Dendritic cell treated with granulocyte-macrophage colony-stimulating factor and Interleukin-4, amounts not matched to agents 40 ng/mL and 50 ng/mL, for 4 days (primary cell): ENCODE measurements at regions of chr2 and their contacts with region 1.

Region 1: DNA sequence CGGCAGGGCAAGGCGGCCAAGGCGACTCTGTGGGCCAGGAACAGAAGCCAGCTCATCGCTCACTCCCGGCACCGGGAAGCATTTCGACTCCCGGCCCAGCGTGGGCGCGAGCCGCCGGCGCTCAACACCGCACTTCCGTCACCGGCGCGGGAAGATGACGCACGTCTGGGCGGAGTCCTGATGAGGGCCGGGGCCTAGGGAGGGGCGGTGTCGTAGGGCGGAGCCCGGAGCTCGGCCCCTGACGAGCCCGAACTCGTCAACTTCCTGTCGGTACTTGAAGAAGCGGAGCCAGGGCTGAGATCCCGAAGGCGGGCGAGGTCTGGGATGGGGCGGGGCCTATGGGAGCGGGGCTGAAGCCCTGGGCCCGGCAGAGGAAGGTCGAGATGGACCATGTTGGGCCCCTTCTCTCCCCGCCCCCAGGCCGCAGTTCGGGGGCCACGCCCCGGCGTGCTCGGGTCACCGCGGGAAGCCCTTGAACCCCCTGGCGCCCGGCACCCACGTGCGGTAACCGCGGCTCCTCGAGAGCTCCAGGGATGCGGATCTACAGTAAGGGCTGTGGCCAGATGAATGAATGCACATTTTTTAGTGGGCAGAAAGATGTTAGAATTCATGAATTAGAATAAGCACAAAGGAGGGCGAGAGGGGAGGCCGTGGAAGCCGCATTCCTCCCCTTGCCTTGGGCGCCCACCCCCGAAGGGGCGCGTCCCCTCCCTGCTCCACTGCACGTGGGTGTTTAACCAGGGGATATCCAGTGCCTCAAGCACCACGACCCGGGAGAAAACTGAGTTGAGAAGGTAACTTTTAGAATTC is at the start of gene RNASEH1:
- H3K4me3 Mint-ChIP-seq: peak within 1 kb of the TSS; percentile 86
- H3K27ac Mint-ChIP-seq: peak within 1 kb of the TSS; percentile 95
- H3K4me1 Mint-ChIP-seq: peaks cover 9% of the 10 kb centered on the region
- H3K27me3 Mint-ChIP-seq: no peaks in the 10 kb centered on the region

Region 2: DNA sequence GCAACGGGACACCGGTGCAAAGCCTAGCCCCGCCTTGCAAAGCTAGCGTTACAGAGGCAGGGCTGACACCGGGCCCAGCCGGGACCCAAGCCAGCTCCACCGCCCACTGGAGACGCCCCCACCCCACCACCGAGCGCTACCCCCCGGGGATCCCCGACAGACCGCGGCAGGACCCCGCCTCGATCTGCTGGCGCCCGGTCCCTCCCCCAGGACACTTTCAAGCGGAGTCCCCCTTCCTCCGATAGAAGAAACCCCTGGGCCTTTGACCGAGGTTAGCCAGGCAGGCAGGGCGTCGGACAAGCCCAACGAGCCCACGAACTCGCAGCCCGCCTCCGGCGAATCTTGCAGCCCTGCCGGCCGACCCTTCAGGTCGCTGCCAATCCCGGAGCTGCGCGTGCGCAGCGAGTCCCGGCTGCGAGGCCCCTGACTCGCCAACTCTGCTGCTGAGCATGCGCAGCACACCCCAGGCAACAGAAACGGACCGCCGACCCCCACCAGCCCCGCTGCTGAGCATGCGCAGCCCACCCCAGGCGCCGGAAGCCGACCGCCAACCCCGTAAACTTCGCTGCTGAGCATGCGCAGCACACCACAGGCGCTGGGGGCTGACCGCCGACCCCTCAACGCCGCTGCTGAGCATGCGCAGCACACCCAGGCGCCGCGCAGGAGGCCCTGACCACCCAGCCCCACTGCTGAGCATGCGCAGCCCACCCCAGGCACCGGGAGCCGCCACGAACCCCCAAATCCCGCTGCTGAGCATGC is 39.7 kb before region 1 on chr2:
- intact Hi-C with region 1: loop called (anchors 1 kb)
- H3K4me3 Mint-ChIP-seq: peak overlapping the region; percentile 94
- H3K27ac Mint-ChIP-seq: peak overlapping the region; percentile 95
- H3K4me1 Mint-ChIP-seq: peaks cover 37% of the 10 kb centered on the region
- H3K27me3 Mint-ChIP-seq: no peaks in the 10 kb centered on the region